ENCODE measurements at regions of chr16 and their contacts with region 1.

Region 1: GRCh38 chr16:67159593-67160406 is at the starts of genes FBXL8 and TRADD:
- DNase-seq: peak; percentile 67
- ATAC-seq: 0 out of 2 replicates have a peak, but pooled peaks have one; percentile 2
- H3K4me3 Mint-ChIP-seq: peak within 1 kb of the TSS; percentile 74
- H3K27ac Mint-ChIP-seq: no peak within 1 kb of the TSS
- H3K4me1 Mint-ChIP-seq: peaks cover 28% of the 10 kb centered on the region
- H3K27me3 Mint-ChIP-seq: peaks cover 99% of the 10 kb centered on the region
- CTCF ChIP-seq: 0 out of 2 replicates have a peak, but pooled peaks have one; percentile 28
- total RNA-seq, gene FBXL8: 1.1 to 1.2 TPM (median 1.1 TPM) in 3 replicates
- total RNA-seq, gene TRADD: 1.4 to 2.1 TPM (median 1.7 TPM) in 3 replicates

Region 2: DNA sequence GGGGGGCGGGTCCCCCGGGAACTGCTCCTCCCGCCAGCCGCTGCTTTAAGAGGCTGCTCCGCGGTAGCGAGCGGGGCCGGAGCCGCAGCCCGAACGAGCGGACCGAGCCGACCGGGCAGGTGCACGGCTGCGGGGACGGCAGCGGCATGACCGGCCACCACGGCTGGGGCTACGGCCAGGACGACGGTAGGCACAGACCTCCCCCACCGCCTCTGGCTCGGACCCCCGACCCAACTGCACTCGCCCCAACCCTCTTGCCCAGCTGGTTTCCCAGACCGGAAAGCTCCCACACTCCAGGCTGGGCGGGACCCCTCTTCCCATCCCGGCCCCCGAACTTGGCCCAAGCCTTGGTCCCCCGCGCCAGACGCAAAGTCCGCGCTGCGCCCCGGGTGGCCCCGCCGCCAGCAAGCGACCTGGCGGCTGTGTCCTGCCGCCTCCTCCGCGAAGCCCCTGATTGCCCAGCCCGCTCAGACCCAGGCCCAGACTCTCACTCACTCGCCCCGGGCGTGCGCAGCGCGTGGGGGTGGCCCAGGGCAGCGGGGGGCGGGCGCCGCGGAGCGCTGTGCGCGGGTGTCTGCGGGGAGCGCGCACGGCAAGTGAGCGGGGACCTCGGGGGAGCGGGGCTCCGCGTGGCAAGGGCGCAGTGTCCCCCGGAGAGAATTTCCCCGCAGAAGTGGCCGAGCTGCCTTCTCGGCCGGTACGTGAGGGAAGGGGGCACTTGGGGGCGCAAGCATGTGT is 315.3 kb before region 1 on chr16 and contains the start of gene CA7:
- CTCF ChIA-PET with region 1: no interaction called
- POLR2A ChIA-PET with region 1: no interaction called
- DNase-seq: peak; percentile 59
- ATAC-seq: no peak; the same call in 1 of the 2 replicates
- H3K4me3 Mint-ChIP-seq: peak within 1 kb of the TSS; percentile 81
- H3K27ac Mint-ChIP-seq: no peak within 1 kb of the TSS
- H3K4me1 Mint-ChIP-seq: peaks cover 13% of the 10 kb centered on the region
- H3K27me3 Mint-ChIP-seq: peaks cover 85% of the 10 kb centered on the region
- CTCF ChIP-seq: no peak
- total RNA-seq, gene CA7: 1.4 to 2.2 TPM (median 1.6 TPM) in 3 replicates

Region 3: GRCh38 chr16:66943426-66944053 is 216.3 kb before region 1 on chr16:
- CTCF ChIA-PET with region 1: interaction called, 10 read pairs
- POLR2A ChIA-PET with region 1: no interaction called
- DNase-seq: no peak
- ATAC-seq: no peak
- H3K4me3 Mint-ChIP-seq: no peak overlapping the region
- H3K27ac Mint-ChIP-seq: no peak overlapping the region
- H3K4me1 Mint-ChIP-seq: peaks cover 11% of the 10 kb centered on the region
- H3K27me3 Mint-ChIP-seq: peaks cover 19% of the 10 kb centered on the region
- CTCF ChIP-seq: no peak

Region 4: DNA sequence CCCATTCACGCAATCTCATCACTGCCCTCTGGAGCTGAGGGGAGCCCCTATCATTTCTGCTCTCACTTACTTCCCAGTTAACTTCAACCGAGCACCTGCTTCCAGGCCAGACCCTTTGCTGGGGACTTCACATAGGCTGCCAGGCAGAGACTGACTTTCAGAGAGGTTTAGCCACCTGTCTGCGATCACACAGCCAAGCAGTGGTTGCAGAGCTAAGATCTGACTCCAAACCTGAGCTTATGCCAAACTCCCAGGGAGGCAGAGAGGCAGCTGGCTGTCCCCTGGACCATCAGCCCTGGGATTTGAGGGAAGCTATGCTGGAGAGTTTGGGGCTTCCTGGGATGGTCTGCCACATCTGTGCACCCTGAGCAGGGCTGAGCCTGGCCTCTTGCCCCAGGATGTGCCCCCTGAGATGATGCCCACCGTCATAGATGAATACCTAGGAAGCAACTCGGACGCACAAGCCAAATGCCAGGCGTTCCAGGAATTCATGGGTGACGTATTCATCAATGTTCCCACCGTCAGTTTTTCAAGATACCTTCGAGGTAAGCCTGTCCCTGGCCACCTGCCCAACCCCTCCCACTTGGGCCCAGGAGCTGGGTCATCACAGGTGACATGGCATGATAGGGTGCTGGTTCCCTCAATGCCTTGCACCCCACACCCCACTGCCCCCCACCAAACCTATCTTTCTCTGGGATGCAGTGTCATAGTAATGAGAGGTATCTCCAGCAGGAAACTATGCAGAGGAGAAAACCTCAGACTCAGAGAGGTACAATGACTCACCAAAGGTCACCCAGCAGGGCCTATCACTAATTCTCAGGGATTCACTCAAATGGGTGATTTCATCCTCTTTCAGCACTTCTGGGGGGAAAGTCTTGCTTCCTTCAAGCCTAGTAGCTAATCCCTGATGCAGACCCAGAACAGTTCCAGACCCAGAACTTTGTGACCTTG is 188.8 kb before region 1 on chr16:
- CTCF ChIA-PET with region 1: interaction called, 14 read pairs
- POLR2A ChIA-PET with region 1: no interaction called
- DNase-seq: no peak
- ATAC-seq: no peak
- H3K4me3 Mint-ChIP-seq: no peak overlapping the region
- H3K27ac Mint-ChIP-seq: no peak overlapping the region
- H3K4me1 Mint-ChIP-seq: peaks cover 3% of the 10 kb centered on the region
- H3K27me3 Mint-ChIP-seq: no peaks in the 10 kb centered on the region; the same call in 1 of the 2 replicates
- CTCF ChIP-seq: no peak

Region 5: GRCh38 chr16:67000384-67001351 is 159.1 kb before region 1 on chr16:
- CTCF ChIA-PET with region 1: interaction called, 14 read pairs
- POLR2A ChIA-PET with region 1: no interaction called
- DNase-seq: peak; percentile 73
- ATAC-seq: peak; percentile 90
- H3K4me3 Mint-ChIP-seq: peak overlapping the region; percentile 66
- H3K27ac Mint-ChIP-seq: no peak overlapping the region
- H3K4me1 Mint-ChIP-seq: peaks cover 4% of the 10 kb centered on the region
- H3K27me3 Mint-ChIP-seq: peaks cover 80% of the 10 kb centered on the region
- CTCF ChIP-seq: no peak

Region 6: GRCh38 chr16:67087803-67088202 is 72.0 kb before region 1 on chr16:
- CTCF ChIA-PET with region 1: no interaction called
- POLR2A ChIA-PET with region 1: no interaction called
- DNase-seq: no peak
- ATAC-seq: no peak
- H3K4me3 Mint-ChIP-seq: no peak overlapping the region
- H3K27ac Mint-ChIP-seq: no peak overlapping the region
- H3K4me1 Mint-ChIP-seq: no peaks in the 10 kb centered on the region
- H3K27me3 Mint-ChIP-seq: no peaks in the 10 kb centered on the region
- CTCF ChIP-seq: no peak

Region 7: GRCh38 chr16:67104061-67104460 is 55.7 kb before region 1 on chr16:
- CTCF ChIA-PET with region 1: interaction called, 50 read pairs
- POLR2A ChIA-PET with region 1: interaction called, 3 read pairs
- DNase-seq: peak; percentile 60
- ATAC-seq: peak; percentile 96
- H3K4me3 Mint-ChIP-seq: no peak overlapping the region
- H3K27ac Mint-ChIP-seq: no peak overlapping the region; the same call in none of the 2 replicates
- H3K4me1 Mint-ChIP-seq: 0 out of 2 replicates have a peak, but pooled peaks cover 2% of the 10 kb centered on the region
- H3K27me3 Mint-ChIP-seq: peaks cover 5% of the 10 kb centered on the region; the same call in 1 of the 2 replicates
- CTCF ChIP-seq: no peak

Region 8: DNA sequence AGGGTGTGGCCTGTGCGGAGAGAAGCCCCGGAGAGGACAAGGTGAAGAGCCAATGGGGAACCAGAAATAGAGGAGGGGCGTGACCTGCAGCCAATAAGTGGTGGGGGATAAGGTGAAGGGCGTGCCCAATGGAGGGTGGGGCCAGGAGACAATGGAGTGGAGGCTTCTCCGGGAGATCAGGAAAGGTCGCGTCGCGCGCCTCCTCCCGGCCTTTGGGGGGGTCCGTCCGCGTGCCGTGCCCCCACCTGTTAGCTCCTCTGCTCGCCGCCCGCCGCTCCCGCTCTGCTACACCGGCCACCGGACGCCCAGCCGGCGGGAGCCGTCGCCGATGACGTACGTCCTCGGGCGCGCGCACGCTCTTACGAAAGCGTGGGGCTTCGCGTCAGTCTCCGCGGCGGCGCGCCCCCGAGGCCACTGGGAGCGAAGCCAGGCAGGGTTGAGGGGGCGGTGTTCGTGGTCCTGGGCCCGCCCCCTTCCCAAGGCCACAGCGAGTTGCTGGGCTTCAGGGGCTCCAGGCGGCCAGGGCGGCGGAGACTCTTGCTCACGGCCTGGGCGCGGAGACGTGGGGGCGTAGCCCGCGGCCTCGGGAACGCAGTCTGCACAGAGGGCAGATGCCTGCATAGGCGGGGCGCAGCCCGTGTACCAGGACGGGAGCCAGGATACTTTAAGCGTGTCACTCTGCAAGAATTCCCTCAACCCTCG is 24.0 kb after region 1 on chr16 and contains the start of gene MATCAP1:
- CTCF ChIA-PET with region 1: interaction called, 75 read pairs
- POLR2A ChIA-PET with region 1: interaction called, 3 read pairs
- DNase-seq: peak; percentile 94
- ATAC-seq: peak; percentile 90
- H3K4me3 Mint-ChIP-seq: peak within 1 kb of the TSS; percentile 82
- H3K27ac Mint-ChIP-seq: no peak within 1 kb of the TSS
- H3K4me1 Mint-ChIP-seq: peaks cover 20% of the 10 kb centered on the region
- H3K27me3 Mint-ChIP-seq: peaks cover 31% of the 10 kb centered on the region
- CTCF ChIP-seq: no peak
- total RNA-seq, gene MATCAP1: 40.8 to 54.3 TPM (median 50.5 TPM) in 3 replicates

Region 9: GRCh38 chr16:67246934-67247697 is 87.3 kb after region 1 on chr16 and contains the start of gene FHOD1:
- CTCF ChIA-PET with region 1: interaction called, 13 read pairs
- POLR2A ChIA-PET with region 1: no interaction called
- DNase-seq: peak; percentile 99
- ATAC-seq: peak; percentile 61
- H3K4me3 Mint-ChIP-seq: peak within 1 kb of the TSS; percentile 89
- H3K27ac Mint-ChIP-seq: peak within 1 kb of the TSS; percentile 85
- H3K4me1 Mint-ChIP-seq: peaks cover 34% of the 10 kb centered on the region
- H3K27me3 Mint-ChIP-seq: peaks cover 40% of the 10 kb centered on the region
- CTCF ChIP-seq: no peak
- total RNA-seq, gene FHOD1: 68.9 to 81.3 TPM (median 71.5 TPM) in 3 replicates

Measured in WTC11 (cell line).